ENCODE measurements at regions of chr13 and their contacts with region 1.

Region 1: GRCh38 chr13:106100171-106100919 is 435.1 kb downstream of the EFNB2 start:
- DNase-seq: peak; percentile 50
- H3K4me3 Mint-ChIP-seq: no peak overlapping the region
- H3K27ac Mint-ChIP-seq: peak overlapping the region; percentile 66
- H3K4me1 Mint-ChIP-seq: peaks cover 51% of the 10 kb centered on the region
- H3K27me3 Mint-ChIP-seq: no peaks in the 10 kb centered on the region
- CTCF ChIP-seq: no peak

Region 2: GRCh38 chr13:106143930-106144709 is 43.8 kb after region 1 on chr13:
- CTCF ChIA-PET with region 1: no interaction called
- intact Hi-C with region 1: loop called (anchors 5 kb)
- DNase-seq: peak; percentile 14
- H3K4me3 Mint-ChIP-seq: no peak overlapping the region
- H3K27ac Mint-ChIP-seq: peak overlapping the region; percentile 52
- H3K4me1 Mint-ChIP-seq: peaks cover 14% of the 10 kb centered on the region
- H3K27me3 Mint-ChIP-seq: no peaks in the 10 kb centered on the region
- CTCF ChIP-seq: no peak

Measured in Calu3 (cell line).